ENCODE measurements at regions of chr11 and their contacts with region 1.

Region 1: DNA sequence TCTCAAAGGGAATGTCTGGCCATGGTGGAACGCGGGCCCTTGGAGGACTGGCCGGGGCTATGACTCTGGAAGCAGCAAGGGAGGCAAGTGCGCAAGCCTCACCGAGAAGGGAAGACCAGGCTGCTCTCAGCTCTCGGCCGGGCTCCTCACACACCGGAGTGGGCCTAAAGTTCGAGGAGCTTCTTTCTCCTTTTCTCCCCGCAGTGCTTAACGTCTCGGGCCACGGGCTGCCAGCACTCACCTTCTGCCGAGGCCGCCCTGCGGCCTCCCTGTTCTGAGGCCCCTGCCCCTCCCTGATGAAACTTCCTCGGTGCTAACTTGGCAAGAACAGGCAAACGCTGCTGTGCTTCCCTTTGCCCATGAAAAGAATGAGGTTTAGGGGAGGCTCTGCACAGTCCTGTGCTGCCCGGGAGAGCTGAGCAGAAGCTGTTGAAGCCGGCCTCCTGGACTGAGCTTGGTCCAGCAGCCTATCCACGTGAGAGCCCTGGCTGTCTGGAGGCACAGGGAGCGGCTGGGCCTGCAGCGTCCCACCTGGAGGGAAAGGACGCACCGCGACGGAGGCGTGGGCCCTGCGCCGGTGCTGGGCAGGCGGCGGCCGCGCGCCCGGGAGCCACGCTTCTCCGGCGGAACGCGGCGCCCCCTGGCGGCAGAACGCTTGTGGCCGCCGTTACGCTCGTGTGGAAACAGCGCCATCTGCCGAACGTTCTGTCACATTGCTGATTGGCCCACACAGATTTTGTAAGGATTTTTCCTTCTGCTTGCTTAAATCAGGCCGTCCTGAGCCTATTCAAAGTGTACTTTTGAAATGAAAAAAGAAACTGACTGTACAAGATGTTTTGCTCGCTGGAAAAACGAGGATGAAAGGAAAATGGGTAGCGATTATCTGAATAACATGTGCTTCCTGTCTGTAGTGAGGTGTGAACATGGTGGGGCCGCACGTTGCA is 65.0 kb upstream of the TMEM45B start:
- DNase-seq: peak; percentile 72
- H3K4me3 Mint-ChIP-seq: no peak overlapping the region
- H3K27ac Mint-ChIP-seq: no peak overlapping the region
- H3K4me1 Mint-ChIP-seq: no peaks in the 10 kb centered on the region
- H3K27me3 Mint-ChIP-seq: peaks cover 13% of the 10 kb centered on the region
- CTCF ChIP-seq: peak; percentile 100

Region 2: GRCh38 chr11:128695539-128696221 is 1054.9 kb before region 1 on chr11:
- CTCF ChIA-PET with region 1: no interaction called
- POLR2A ChIA-PET with region 1: no interaction called
- intact Hi-C with region 1: no loop called
- DNase-seq: peak; percentile 46
- H3K4me3 Mint-ChIP-seq: no peak overlapping the region
- H3K27ac Mint-ChIP-seq: no peak overlapping the region
- H3K4me1 Mint-ChIP-seq: no peaks in the 10 kb centered on the region
- H3K27me3 Mint-ChIP-seq: no peaks in the 10 kb centered on the region
- CTCF ChIP-seq: no peak

Region 3: DNA sequence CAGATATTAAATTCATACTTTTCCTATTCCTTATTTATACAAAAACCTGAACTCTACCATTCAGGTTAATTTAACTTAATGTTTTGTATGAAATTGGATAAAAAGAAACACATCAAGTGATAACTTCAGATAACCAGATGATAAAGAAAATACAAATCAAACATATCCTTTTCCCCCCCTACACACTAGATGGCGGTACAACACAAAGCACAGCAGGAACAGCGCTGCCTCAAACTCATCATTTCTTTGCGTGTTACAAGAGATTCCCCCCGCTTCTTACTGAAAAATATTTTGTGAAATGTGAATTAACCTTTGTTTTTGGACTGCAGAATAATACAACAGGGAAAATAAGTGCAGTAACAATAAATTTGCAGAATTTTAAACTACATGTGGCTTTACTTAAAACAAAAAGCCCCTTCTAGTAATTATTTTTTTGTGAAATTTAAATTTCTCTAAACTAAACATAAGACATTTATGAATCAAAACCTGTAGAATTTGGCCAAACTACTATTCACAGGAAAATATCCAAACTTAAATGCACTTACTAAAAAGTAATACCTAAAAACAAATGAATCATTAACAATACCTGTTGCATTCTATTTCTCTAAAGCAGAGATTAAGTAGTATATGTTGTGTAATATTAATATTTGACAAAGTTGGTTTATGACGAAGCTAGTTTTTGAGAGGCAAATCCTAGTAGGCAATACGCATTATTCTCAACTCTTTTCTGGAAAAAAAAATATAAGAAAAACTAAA is 632.8 kb before region 1 on chr11:
- CTCF ChIA-PET with region 1: interaction called, 5 read pairs
- POLR2A ChIA-PET with region 1: interaction called, 3 read pairs
- intact Hi-C with region 1: loop called (anchors 1 kb)
- DNase-seq: peak; percentile 79
- H3K4me3 Mint-ChIP-seq: no peak overlapping the region
- H3K27ac Mint-ChIP-seq: no peak overlapping the region
- H3K4me1 Mint-ChIP-seq: peaks cover 33% of the 10 kb centered on the region
- H3K27me3 Mint-ChIP-seq: no peaks in the 10 kb centered on the region
- CTCF ChIP-seq: peak; percentile 84

Region 4: DNA sequence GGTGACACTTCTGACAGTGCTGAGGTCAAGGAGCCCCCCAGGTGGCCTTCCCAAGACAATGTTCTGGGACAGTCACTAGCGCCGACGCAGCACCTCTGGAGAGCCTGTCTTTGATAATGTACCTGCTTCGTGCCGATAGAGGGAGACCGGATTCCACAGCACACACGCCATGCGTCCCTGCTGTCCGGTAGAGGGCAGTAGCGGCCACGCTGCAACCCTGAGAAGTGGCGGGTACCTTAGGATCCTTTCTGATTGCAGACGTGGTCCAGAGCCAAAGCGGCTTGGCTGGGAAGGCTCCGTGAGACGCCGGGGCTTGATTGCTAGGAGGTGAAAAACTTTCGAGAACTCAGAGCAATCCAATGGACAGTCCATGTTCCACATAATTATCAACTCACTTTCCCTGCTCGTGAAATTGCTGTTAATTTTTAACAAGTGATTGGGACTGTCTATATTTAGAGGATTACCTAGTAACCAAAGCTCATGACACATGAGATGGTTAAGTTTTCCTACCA is 386.4 kb before region 1 on chr11:
- CTCF ChIA-PET with region 1: interaction called, 169 read pairs
- POLR2A ChIA-PET with region 1: interaction called, 5 read pairs
- intact Hi-C with region 1: loop called (anchors 1 kb)
- DNase-seq: peak; percentile 89
- H3K4me3 Mint-ChIP-seq: no peak overlapping the region
- H3K27ac Mint-ChIP-seq: no peak overlapping the region
- H3K4me1 Mint-ChIP-seq: peaks cover 6% of the 10 kb centered on the region
- H3K27me3 Mint-ChIP-seq: peaks cover 61% of the 10 kb centered on the region
- CTCF ChIP-seq: peak; percentile 100

Region 5: GRCh38 chr11:129695575-129696308 is 54.9 kb before region 1 on chr11:
- CTCF ChIA-PET with region 1: interaction called, 16 read pairs
- POLR2A ChIA-PET with region 1: no interaction called
- intact Hi-C with region 1: loop called (anchors 2 kb)
- DNase-seq: peak; percentile 62
- H3K4me3 Mint-ChIP-seq: no peak overlapping the region
- H3K27ac Mint-ChIP-seq: no peak overlapping the region
- H3K4me1 Mint-ChIP-seq: no peaks in the 10 kb centered on the region
- H3K27me3 Mint-ChIP-seq: peaks cover 60% of the 10 kb centered on the region
- CTCF ChIP-seq: peak; percentile 84

Region 6: GRCh38 chr11:129728575-129728974 is 22.0 kb before region 1 on chr11:
- CTCF ChIA-PET with region 1: interaction called, 16 read pairs
- POLR2A ChIA-PET with region 1: interaction called, 3 read pairs
- intact Hi-C with region 1: no loop called
- DNase-seq: peak; percentile 55
- H3K4me3 Mint-ChIP-seq: no peak overlapping the region
- H3K27ac Mint-ChIP-seq: no peak overlapping the region
- H3K4me1 Mint-ChIP-seq: peaks cover 54% of the 10 kb centered on the region
- H3K27me3 Mint-ChIP-seq: peaks cover 5% of the 10 kb centered on the region
- CTCF ChIP-seq: no peak

Region 7: GRCh38 chr11:130592056-130592455 is 841.4 kb after region 1 on chr11:
- CTCF ChIA-PET with region 1: no interaction called
- POLR2A ChIA-PET with region 1: no interaction called
- intact Hi-C with region 1: no loop called
- DNase-seq: peak; percentile 41
- H3K4me3 Mint-ChIP-seq: no peak overlapping the region
- H3K27ac Mint-ChIP-seq: peak overlapping the region; percentile 37
- H3K4me1 Mint-ChIP-seq: peaks cover 6% of the 10 kb centered on the region
- H3K27me3 Mint-ChIP-seq: no peaks in the 10 kb centered on the region
- CTCF ChIP-seq: no peak